ENCODE measurements at regions of chr2 and their contacts with region 1.

Region 1: DNA sequence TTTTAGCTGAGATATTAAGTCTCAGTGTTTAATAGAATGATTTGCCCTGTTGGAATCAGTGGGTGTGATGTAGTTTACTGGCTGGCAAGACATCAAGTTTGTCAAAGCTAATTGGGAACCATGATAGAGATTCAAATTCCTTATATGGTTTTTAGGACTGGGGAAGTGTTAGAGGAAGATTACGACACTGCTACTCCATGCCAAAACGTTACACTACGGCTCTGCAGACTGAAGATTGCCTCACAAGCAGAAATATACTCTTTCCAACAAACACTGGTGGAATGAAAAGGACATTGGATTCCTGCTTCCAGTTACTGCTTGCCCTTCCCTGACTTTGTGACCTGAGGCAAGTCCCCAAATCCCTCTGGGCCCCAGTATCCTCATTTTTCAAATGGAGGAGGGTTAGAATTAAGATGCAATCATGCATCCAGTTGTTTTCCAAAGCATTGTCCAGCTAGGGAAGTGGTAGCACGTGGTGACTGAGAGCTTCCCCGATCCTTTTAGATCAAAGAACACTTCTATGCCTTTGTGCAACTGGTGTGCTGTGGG is 147.6 kb downstream of the CDC42EP3 start:
- DNase-seq: no peak
- H3K4me3 Mint-ChIP-seq: no peak overlapping the region
- H3K27ac Mint-ChIP-seq: no peak overlapping the region
- H3K4me1 Mint-ChIP-seq: no peaks in the 10 kb centered on the region
- H3K27me3 Mint-ChIP-seq: peaks cover 17% of the 10 kb centered on the region

Region 2: GRCh38 chr2:37090019-37090477 is 433.8 kb before region 1 on chr2:
- intact Hi-C with region 1: no loop called
- DNase-seq: no peak
- H3K4me3 Mint-ChIP-seq: no peak overlapping the region
- H3K27ac Mint-ChIP-seq: no peak overlapping the region
- H3K4me1 Mint-ChIP-seq: no peaks in the 10 kb centered on the region
- H3K27me3 Mint-ChIP-seq: no peaks in the 10 kb centered on the region

Region 3: GRCh38 chr2:37318401-37318800 is 205.5 kb before region 1 on chr2:
- intact Hi-C with region 1: loop called (anchors 10 kb)
- DNase-seq: no peak
- H3K4me3 Mint-ChIP-seq: no peak overlapping the region
- H3K27ac Mint-ChIP-seq: no peak overlapping the region
- H3K4me1 Mint-ChIP-seq: peaks cover 33% of the 10 kb centered on the region
- H3K27me3 Mint-ChIP-seq: peaks cover 9% of the 10 kb centered on the region

Region 4: GRCh38 chr2:37414470-37414949 is 109.4 kb before region 1 on chr2:
- intact Hi-C with region 1: loop called (anchors 5 kb)
- DNase-seq: no peak
- H3K4me3 Mint-ChIP-seq: no peak overlapping the region
- H3K27ac Mint-ChIP-seq: no peak overlapping the region
- H3K4me1 Mint-ChIP-seq: no peaks in the 10 kb centered on the region
- H3K27me3 Mint-ChIP-seq: peaks cover 18% of the 10 kb centered on the region

Measured in activated T-helper 1 cell treated with anti-CD3 and anti-CD28 coated beads, Interleukin-12 subunit alpha, Interleukin-12 subunit beta, Interleukin-2, Interleukin-4 antibody, amounts not matched to agents 30 ng/mL and 10 ng/mL and 1 ng/mL, durations not matched to agents 14 hours and 24 hours and 36 hours (primary cell).